HEK293 (cell line): ENCODE measurements at regions of chr6 and their contacts with region 1.

Region 1: GRCh38 chr6:125995972-125996580 is 9.7 kb downstream of the TRMT11 start:
- H3K4me3 ChIP-seq: no peak overlapping the region
- H3K27ac ChIP-seq: no peak overlapping the region
- H3K4me1 ChIP-seq: peaks cover 21% of the 10 kb centered on the region; the same call in 1 of the 2 replicates
- CTCF ChIP-seq: peak; percentile 58

Region 2: GRCh38 chr6:126015863-126016262 is 19.8 kb after region 1 on chr6:
- CTCF ChIA-PET with region 1: interaction called, 25 read pairs
- POLR2A ChIA-PET with region 1: interaction called, 5 read pairs
- H3K4me3 ChIP-seq: no peak overlapping the region
- H3K27ac ChIP-seq: no peak overlapping the region
- H3K4me1 ChIP-seq: no peaks in the 10 kb centered on the region
- CTCF ChIP-seq: no peak

Region 3: GRCh38 chr6:126054258-126054702 is 58.2 kb after region 1 on chr6:
- CTCF ChIA-PET with region 1: no interaction called
- POLR2A ChIA-PET with region 1: no interaction called
- H3K4me3 ChIP-seq: no peak overlapping the region
- H3K27ac ChIP-seq: no peak overlapping the region
- H3K4me1 ChIP-seq: no peaks in the 10 kb centered on the region
- CTCF ChIP-seq: no peak

Region 4: GRCh38 chr6:126112144-126112632 is 116.1 kb after region 1 on chr6:
- CTCF ChIA-PET with region 1: no interaction called
- POLR2A ChIA-PET with region 1: no interaction called
- H3K4me3 ChIP-seq: no peak overlapping the region
- H3K27ac ChIP-seq: no peak overlapping the region
- H3K4me1 ChIP-seq: no peaks in the 10 kb centered on the region
- CTCF ChIP-seq: no peak